ENCODE measurements at regions of chr12 and their contacts with region 1.

Region 1: DNA sequence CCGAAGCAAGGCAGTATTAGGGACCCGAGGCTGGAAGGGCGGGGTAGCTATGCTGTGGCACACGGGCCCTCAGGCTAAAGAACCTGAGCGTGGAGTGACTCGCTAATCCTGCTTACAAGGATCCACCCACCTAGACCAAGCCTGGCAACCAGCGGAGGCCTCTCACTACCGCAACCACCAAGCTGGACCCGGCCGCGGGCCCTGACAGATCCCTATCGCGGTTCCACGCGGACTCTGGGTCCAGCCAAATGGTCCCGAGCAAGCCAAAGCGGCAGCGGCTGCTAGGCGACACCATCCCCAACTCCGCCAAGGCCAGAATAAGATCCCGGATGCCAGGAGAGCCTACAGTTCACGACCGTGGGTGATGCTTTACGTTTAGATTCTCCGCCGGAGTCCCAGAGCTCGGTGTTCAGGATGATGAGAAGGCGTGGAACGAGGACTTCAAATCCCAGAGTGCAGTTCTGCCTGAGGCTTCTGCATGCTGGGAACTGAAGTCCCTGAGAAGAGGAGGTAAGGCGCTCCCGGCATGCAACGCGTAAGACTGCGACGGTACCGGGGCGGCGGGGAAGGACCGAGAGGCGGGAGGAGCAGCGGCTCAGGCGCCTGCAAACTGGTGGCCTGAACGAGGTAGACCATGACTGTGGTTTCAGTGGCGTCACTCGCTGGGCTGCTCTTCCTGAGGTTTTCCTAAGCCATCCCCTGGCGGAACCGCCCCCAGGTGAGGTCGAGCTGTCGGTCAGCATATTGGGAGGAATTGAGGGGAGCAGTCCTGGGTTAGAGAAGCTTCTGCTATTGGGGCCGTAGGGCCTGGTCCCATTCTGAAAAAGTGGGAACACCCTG is at the starts of genes CEP290 and TMTC3:
- DNase-seq: peak; percentile 95
- H3K4me3 Mint-ChIP-seq: peak within 1 kb of the TSS; percentile 96
- H3K27ac Mint-ChIP-seq: peak within 1 kb of the TSS; percentile 86
- H3K4me1 Mint-ChIP-seq: peaks cover 37% of the 10 kb centered on the region
- H3K27me3 Mint-ChIP-seq: no peaks in the 10 kb centered on the region
- total RNA-seq, gene CEP290: 12.8 to 13.7 TPM
- total RNA-seq, gene TMTC3: 5.3 to 6.8 TPM

Region 2: GRCh38 chr12:87779016-87779415 is 363.0 kb before region 1 on chr12:
- CTCF ChIA-PET with region 1: no interaction called
- POLR2A ChIA-PET with region 1: no interaction called
- intact Hi-C with region 1: no loop called
- DNase-seq: no peak
- H3K4me3 Mint-ChIP-seq: no peak overlapping the region
- H3K27ac Mint-ChIP-seq: no peak overlapping the region
- H3K4me1 Mint-ChIP-seq: no peaks in the 10 kb centered on the region
- H3K27me3 Mint-ChIP-seq: no peaks in the 10 kb centered on the region

Region 3: DNA sequence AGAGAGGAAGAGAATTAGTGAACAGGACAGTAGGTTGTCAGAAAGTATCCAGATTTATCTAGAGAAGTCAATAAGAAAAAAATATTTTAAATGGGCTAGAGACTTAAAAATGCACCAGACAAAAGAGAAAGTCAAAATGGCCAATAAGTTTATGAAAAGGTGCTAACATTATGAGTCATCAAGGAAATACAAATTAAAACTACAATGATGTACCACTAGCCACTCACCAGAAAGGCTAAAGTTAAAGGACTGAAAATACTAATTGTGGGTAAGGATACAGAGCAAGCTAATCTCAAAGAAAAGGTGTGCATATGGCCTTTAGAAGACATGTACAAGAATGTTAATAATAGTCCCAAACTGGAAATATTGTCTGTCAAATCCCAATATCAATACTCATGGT is 150.5 kb before region 1 on chr12:
- CTCF ChIA-PET with region 1: no interaction called
- POLR2A ChIA-PET with region 1: no interaction called
- intact Hi-C with region 1: no loop called
- DNase-seq: no peak
- H3K4me3 Mint-ChIP-seq: no peak overlapping the region
- H3K27ac Mint-ChIP-seq: no peak overlapping the region
- H3K4me1 Mint-ChIP-seq: peaks cover 2% of the 10 kb centered on the region
- H3K27me3 Mint-ChIP-seq: peaks cover 2% of the 10 kb centered on the region

Region 4: GRCh38 chr12:88006351-88006750 is 135.6 kb before region 1 on chr12:
- CTCF ChIA-PET with region 1: no interaction called
- POLR2A ChIA-PET with region 1: no interaction called
- intact Hi-C with region 1: no loop called
- DNase-seq: no peak
- H3K4me3 Mint-ChIP-seq: no peak overlapping the region
- H3K27ac Mint-ChIP-seq: no peak overlapping the region
- H3K4me1 Mint-ChIP-seq: no peaks in the 10 kb centered on the region
- H3K27me3 Mint-ChIP-seq: peaks cover 4% of the 10 kb centered on the region

Region 5: DNA sequence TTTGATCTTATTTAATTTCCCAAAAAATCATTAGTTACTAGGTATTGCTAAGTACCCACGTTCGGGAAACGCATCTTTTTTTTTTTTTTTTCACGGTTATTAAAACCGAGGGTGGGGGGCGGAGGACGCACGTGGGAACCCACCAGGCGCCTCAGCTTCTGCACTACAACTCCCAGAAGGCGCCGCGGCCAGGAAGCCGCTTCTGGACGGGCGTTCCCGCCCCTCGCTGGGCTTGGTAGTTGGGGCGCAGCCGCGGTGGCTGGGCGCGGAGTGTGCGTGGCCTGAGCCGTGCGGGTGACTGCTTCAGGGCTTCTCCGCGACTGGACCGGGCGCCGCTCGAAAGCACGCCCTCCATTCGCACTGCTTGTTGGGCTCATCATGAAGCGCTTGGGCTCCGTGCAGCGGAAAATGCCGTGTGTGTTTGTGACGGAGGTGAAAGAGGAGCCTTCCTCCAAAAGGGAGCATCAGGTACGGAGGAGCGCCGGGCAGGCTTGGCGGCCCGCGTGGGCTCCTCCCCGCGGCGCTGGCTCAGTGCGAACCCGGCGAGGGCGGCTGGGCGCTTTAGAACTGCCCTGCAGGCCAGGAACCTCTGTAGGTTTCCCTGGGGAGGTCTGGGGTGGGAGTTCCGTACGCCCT is 106.6 kb before region 1 on chr12:
- CTCF ChIA-PET with region 1: no interaction called
- POLR2A ChIA-PET with region 1: no interaction called
- intact Hi-C with region 1: loop called (anchors 1 kb)
- DNase-seq: peak; percentile 92
- H3K4me3 Mint-ChIP-seq: peak overlapping the region; percentile 98
- H3K27ac Mint-ChIP-seq: peak overlapping the region; percentile 94
- H3K4me1 Mint-ChIP-seq: peaks cover 47% of the 10 kb centered on the region
- H3K27me3 Mint-ChIP-seq: no peaks in the 10 kb centered on the region

Region 6: DNA sequence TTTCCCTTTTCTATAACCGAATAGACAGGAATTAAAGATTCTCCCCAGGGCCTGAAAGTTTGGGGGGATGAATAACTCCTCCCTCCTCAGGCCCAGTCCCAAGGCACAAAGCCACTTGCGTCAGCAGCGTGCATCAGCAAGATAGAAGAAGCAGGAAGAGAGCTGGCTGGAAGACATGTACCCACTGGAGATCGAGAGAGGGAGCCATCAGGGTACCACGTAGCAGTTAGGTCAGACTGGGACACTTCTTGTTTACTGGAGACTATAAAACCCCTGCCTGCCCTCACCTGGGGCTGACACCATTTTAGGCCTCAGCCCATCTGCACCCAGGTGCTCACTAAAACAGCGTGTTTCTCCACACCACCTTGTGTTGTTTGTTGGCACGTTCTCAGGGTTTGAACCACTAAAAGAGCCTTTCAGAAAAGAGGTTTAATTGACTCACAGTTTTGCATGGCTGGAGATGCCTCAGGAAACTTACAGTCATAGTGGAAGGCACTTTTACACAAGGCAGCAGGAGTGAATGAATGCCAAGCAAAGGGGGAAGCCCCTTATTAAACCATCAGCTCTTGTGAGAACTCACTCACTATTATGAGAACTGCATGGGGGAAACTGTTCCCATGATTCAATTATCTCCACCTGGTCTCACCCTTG is 93.3 kb after region 1 on chr12:
- CTCF ChIA-PET with region 1: no interaction called
- POLR2A ChIA-PET with region 1: no interaction called
- intact Hi-C with region 1: loop called (anchors 1 kb)
- DNase-seq: peak; percentile 52
- H3K4me3 Mint-ChIP-seq: no peak overlapping the region
- H3K27ac Mint-ChIP-seq: peak overlapping the region; percentile 72
- H3K4me1 Mint-ChIP-seq: peaks cover 27% of the 10 kb centered on the region
- H3K27me3 Mint-ChIP-seq: peaks cover 3% of the 10 kb centered on the region

Region 7: DNA sequence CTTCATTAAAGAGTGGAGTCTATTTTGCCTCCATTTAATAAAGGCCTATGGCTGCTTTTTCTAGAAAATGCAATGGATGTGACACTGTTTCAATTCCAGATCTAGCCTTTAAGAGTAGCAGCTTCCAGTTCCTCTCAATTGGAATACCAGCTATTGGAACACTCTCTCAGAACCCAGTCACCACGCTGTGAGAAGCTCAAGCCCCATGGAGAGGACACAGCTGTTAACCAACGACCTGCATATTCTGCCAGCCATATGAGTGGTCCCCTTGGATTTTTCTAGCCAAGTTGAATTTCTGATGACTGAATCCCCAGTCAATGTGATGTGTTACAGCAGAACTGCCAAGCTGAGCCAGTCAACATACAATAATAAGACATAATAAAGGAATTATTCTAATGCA is 131.9 kb after region 1 on chr12:
- CTCF ChIA-PET with region 1: no interaction called
- POLR2A ChIA-PET with region 1: no interaction called
- intact Hi-C with region 1: no loop called
- DNase-seq: no peak
- H3K4me3 Mint-ChIP-seq: no peak overlapping the region
- H3K27ac Mint-ChIP-seq: no peak overlapping the region
- H3K4me1 Mint-ChIP-seq: no peaks in the 10 kb centered on the region
- H3K27me3 Mint-ChIP-seq: peaks cover 1% of the 10 kb centered on the region

Region 8: DNA sequence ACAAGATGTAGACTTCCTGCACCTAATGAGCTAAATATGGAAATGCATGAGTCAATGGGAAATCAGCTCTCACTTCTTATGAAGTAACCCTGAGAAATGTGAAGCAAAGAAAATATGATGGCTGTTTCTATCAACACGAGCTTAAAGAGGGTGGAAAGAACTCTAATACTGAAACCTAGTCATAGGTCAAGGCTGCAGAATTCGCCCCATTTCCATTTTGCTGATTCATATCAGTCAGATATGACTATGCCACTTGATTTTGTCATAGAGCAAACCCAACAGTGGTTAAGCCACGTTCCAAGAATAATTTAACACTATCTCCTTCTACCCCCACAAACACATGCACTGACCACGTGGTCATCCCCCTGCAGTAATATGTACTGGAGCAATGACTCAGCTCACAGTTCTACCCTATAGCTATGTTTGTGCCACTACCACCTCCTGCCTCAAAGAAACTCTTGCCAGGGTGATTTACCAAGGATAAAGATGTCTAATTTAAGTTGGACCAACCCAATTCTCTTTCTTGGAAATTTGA is 157.6 kb after region 1 on chr12:
- CTCF ChIA-PET with region 1: no interaction called
- POLR2A ChIA-PET with region 1: no interaction called
- intact Hi-C with region 1: loop called (anchors 1 kb)
- DNase-seq: peak; percentile 75
- H3K4me3 Mint-ChIP-seq: no peak overlapping the region
- H3K27ac Mint-ChIP-seq: peak overlapping the region; percentile 72
- H3K4me1 Mint-ChIP-seq: peaks cover 27% of the 10 kb centered on the region
- H3K27me3 Mint-ChIP-seq: no peaks in the 10 kb centered on the region

Region 9: DNA sequence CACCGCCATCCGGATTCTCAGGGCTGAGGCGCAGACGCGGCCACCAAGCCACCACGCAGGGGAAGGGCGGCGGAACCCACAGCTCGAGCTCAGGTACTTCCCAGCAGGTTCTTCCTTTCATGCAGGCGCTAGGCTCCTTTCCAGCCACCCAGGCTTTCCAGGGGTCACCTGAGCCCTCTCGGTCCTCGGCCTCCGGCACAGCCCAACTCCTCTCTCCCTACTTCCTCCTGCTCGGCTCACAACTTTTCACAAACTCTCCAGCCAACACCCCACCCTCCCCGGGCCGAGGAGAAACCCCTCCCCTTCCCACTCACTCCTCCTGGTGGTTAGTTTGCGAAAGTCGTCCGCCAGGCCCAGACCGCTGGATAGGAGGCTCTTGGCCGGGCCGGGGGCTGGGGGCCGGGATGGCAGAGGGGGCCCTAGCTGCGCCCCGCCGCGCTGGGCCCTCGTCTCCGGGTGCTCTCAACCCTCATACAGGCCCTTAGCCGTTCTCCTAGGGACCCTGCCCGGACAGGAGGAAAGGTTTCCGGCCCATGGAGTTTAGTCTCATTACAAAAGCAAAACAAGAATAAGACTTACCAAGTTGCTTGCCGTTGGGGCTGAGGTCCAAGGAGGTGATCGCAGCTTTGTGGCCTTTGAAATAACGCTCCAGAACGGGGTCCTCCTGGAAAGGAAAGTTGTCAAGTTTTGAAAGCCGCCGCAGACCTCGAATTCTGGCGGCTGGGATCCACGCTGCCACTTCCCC is 1382.7 kb after region 1 on chr12 and contains the start of gene GALNT4:
- CTCF ChIA-PET with region 1: no interaction called
- POLR2A ChIA-PET with region 1: no interaction called
- intact Hi-C with region 1: loop called (anchors 1 kb)
- DNase-seq: peak; percentile 86
- H3K4me3 Mint-ChIP-seq: peak within 1 kb of the TSS; percentile 99
- H3K27ac Mint-ChIP-seq: peak within 1 kb of the TSS; percentile 98
- H3K4me1 Mint-ChIP-seq: peaks cover 45% of the 10 kb centered on the region
- H3K27me3 Mint-ChIP-seq: no peaks in the 10 kb centered on the region
- total RNA-seq, gene GALNT4: 5.8 to 6.0 TPM

Measured in activated CD4-positive, alpha-beta memory T cell treated with anti-CD3 and anti-CD28 coated beads for 36 hours (primary cell).